ENCODE measurements at regions of chr1 and their contacts with region 1.

Region 1: DNA sequence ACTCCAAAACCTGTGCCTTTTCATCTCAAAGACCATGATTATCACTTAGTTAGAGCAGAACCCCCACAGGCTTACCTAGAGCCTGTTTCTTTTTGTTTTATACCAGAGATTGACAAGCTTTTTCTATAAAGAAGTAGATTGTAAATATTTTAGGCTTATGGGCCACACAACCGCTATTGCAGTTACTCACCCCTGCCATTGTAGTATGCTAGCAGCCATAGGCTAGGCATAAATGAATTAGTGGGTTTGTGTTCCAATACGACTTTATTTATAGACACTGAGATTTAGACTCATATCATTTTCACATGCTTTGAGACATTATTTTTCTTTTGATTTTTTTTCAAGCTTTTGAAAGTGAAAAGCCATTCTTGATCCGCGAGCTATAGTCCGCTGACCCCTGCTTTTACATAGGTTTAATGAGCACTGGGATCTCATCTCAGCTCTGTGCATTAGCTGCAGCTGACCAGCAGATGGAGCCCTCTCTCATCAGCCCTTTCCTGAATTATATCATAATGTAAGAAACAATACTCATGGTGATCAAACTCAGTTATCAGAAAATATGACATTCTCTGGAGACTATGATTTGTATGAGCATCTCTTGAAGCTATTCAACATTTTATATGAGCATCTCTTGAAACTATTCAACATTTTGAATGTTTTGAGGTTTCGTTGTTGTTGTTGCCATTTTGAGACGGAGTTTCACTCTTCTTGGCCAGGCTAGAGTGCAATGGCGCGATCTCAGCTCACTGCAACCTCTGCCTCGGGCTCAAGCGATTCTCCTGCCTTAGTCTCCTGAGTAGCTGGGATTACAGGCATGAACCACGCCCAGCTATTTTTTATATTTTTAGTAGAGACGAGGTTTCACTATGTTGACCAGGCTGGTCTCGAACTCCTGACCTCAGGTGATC is 111.9 kb upstream of the L1TD1 start:
- DNase-seq: no peak
- ATAC-seq: peak; percentile 73
- H3K4me3 ChIP-seq: no peak overlapping the region
- H3K27ac ChIP-seq: no peak overlapping the region
- H3K4me1 ChIP-seq: no peaks in the 10 kb centered on the region
- H3K27me3 ChIP-seq: no peaks in the 10 kb centered on the region

Region 2: DNA sequence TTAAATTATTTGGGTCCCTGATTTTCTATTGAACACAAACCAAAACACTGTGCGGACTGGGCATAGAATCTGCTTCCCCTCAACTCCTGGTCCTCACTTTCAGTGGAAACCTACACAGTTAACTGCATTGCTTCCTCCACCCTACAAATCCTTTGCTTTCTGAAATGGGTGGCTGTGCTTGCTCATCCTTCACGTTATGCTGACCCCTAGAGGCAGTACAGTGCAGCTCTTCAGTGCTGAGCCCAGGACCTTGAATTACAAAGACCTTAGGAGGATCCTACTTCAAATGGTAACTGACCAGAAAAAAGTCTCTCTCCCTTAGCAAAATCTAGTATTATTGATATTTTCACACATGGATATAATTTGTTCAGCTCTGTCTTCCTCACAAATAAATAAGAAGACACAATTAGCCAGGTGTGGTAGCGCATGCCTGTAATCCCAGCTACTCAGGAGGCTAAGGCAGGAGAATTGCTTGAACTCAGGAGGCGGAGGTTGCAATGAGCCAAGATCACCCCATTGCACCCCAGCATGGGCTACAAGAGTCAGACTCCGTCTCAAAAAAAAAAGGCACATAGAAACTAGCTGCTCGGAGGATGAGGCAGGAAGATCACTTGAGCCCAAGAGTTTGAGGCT is 48.5 kb after region 1 on chr1:
- intact Hi-C with region 1: loop called (anchors 2 to 5 kb)
- DNase-seq: no peak
- ATAC-seq: peak; percentile 71
- H3K4me3 ChIP-seq: no peak overlapping the region
- H3K27ac ChIP-seq: no peak overlapping the region
- H3K4me1 ChIP-seq: no peaks in the 10 kb centered on the region
- H3K27me3 ChIP-seq: no peaks in the 10 kb centered on the region

Measured in aorta (tissue), 5 donors.